ENCODE measurements at regions of chr10 and their contacts with region 1.

Region 1: GRCh38 chr10:71696628-71697326 is 22.8 kb downstream of the C10orf105 start:
- DNase-seq: peak; percentile 74
- ATAC-seq: peak; percentile 46 to 62

Region 2: DNA sequence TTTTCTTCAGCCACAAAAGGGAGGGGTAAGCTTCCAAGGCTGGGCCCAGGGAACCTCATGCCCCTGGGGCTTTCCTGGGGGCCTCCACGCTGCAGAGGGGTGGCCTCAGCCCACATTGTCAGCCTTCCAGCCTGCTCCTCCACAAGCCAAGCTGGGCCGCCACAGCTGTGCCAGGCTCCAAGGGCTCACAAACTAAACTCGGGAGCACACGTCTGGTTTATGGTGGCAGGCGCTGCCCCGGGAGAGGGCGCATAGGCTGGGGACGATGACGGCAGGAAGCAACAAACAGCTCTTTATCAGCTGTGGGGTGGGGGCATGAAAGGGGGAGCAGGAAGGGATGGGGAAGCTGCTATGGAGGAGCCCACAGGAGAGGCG is 306.3 kb before region 1 on chr10:
- intact Hi-C with region 1: loop called in 1 of 2 experiments (anchors 5 kb)
- DNase-seq: no peak
- ATAC-seq: no peak

Region 3: GRCh38 chr10:71608819-71609768 is 87.7 kb before region 1 on chr10:
- intact Hi-C with region 1: loop called in 1 of 2 experiments (anchors 5 kb)
- DNase-seq: peak; percentile 84
- ATAC-seq: peak; percentile 49 to 59

Region 4: GRCh38 chr10:71771821-71772617 is 75.2 kb after region 1 on chr10:
- intact Hi-C with region 1: loop called in 1 of 2 experiments (anchors 2 kb)
- DNase-seq: peak; percentile 84
- ATAC-seq: peak; percentile 40 to 75

Measured in left cardiac atrium (tissue), 4 donors.